Naive thymus-derived CD8-positive, alpha-beta T cell (primary cell): ENCODE measurements at regions of chr10 and their contacts with region 1.

Region 1: GRCh38 chr10:22280078-22280477 is 36.1 kb upstream of the COMMD3 start:
- DNase-seq: no peak
- ATAC-seq: no peak
- H3K4me3 Mint-ChIP-seq: no peak overlapping the region
- H3K27ac Mint-ChIP-seq: no peak overlapping the region
- H3K4me1 Mint-ChIP-seq: no peaks in the 10 kb centered on the region
- H3K27me3 Mint-ChIP-seq: peaks cover 5 to 14% (median 11%) of the 10 kb centered on the region in 5 donors

Region 2: DNA sequence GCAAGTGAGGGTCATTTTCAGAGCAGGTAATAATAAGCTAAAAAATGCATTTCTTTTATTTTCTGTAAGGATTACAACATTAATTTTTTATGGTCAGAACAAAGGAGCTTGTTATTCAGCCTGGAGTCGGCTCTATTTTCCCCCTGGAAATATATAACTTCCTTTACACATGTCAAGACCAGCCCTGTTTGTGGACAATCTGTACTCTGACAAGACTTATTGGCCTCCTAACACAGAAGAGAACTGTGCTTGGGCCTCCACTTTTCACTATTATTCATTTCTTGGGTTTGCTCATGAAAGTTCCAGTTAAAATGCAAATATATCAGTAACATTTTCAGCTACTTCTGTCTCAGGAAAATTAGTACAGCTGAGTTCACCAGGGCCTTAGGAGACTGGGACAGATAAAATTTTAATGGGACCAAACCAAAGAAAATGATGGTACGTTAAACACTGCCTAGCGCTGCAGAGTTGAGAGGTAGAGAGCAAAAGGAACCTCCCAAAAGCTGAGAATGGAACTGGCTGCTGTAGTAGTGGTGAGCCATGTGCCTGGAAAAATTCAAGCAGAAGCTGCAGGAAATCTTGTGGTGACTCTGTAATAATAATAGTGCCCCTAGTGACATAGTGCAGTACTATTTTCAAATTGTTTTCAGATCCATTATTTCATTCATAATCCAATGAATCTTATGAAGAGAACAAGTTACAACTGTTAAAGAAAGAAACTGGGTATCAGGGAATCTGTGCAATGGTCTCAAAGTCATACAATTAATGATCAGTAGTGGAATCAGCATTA is 1701.6 kb after region 1 on chr10:
- POLR2A ChIA-PET with region 1: interaction called, 11 read pairs
- DNase-seq: no peak
- ATAC-seq: no peak
- H3K4me3 Mint-ChIP-seq: no peak overlapping the region
- H3K27ac Mint-ChIP-seq: no peak overlapping the region
- H3K4me1 Mint-ChIP-seq: no peaks in the 10 kb centered on the region
- H3K27me3 Mint-ChIP-seq: peaks cover 2 to 24% (median 3%) of the 10 kb centered on the region in 5 donors